Dorsolateral prefrontal cortex (tissue), 120 donors: ENCODE measurements at regions of chr9 and their contacts with region 1.

Region 1: DNA sequence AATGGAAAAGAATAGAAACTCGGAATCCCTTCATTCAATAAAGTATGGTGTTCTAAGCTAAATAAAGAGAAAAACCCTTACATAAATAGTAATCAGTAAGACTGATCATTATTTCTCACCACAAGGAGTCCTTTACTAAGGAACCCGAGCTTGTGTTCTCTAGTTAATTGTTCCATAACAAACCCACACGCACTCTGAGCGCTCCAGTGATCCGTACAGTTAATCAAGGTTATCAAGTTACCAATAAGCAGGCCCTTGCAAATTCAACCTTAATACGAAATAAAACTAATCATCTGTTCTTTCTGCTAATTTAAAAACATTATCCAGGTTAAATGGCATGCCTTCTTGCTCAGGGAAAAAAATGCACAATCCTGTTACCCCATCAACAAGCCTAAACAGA is 224.4 kb downstream of the FRMD3 start:
- DNase-seq: no peak
- H3K4me3 ChIP-seq: no peak overlapping the region
- H3K27ac ChIP-seq: no peak overlapping the region
- H3K27me3 ChIP-seq: no peaks in the 10 kb centered on the region
- CTCF ChIP-seq: no peak

Region 2: GRCh38 chr9:83267741-83268140 is 46.0 kb before region 1 on chr9:
- intact Hi-C with region 1: loop called in 1 of 2 experiments (anchors 1 kb)
- DNase-seq: no peak
- H3K4me3 ChIP-seq: no peak overlapping the region
- H3K27ac ChIP-seq: no peak overlapping the region
- H3K27me3 ChIP-seq: no peaks in the 10 kb centered on the region
- CTCF ChIP-seq: no peak

Region 3: GRCh38 chr9:83355024-83355444 is 41.3 kb after region 1 on chr9:
- intact Hi-C with region 1: no loop called
- DNase-seq: no peak
- H3K4me3 ChIP-seq: no peak overlapping the region
- H3K27ac ChIP-seq: no peak overlapping the region
- H3K27me3 ChIP-seq: no peaks in the 10 kb centered on the region
- CTCF ChIP-seq: no peak

Region 4: GRCh38 chr9:83669067-83669466 is 355.3 kb after region 1 on chr9:
- intact Hi-C with region 1: no loop called
- DNase-seq: no peak
- H3K4me3 ChIP-seq: no peak overlapping the region
- H3K27ac ChIP-seq: no peak overlapping the region
- H3K27me3 ChIP-seq: no peaks in the 10 kb centered on the region
- CTCF ChIP-seq: no peak